ENCODE measurements at regions of chr12 and their contacts with region 1.

Region 1: DNA sequence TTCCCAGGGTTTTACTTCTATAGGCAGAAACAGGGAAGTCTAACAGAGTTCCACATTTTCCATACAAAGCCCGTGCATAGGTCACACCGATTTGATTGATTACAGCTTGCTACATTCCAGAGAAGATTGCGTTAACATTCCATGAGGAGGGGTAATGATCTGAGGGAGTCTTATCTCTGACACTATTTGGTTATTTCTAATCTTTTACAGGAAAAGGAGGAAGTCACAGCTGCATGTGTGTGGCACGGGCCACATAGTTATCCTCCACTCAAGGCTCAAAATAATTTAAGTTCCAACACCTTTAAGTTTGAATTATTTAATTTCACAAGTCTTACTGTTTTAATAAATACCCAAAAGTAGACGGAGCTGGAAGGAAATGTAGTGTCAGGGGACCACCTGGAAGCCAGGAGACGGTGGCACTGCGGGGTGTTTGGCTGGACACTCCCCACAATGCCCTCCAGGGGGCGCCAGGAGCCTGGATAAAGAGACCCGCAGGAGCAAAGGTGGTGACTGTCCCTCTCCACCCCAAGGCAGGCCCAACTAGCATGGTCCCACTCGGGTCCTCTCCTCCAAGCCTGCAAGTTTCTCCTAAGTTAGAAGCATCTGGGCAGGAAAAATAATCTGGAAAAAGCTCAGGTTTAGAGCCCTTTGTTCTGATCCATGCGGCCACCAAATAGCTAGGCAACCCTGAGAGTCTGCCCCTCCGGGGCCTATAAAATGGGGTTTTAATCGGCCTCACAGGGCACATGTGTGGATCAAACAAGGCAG is 20.2 kb downstream of the KRT8 start:
- DNase-seq: no peak
- H3K4me3 ChIP-seq: no peak overlapping the region
- H3K27ac ChIP-seq: no peak overlapping the region
- H3K27me3 ChIP-seq: no peaks in the 10 kb centered on the region
- CTCF ChIP-seq: peak; percentile 96

Region 2: GRCh38 chr12:52156736-52157565 is 727.8 kb before region 1 on chr12:
- CTCF ChIA-PET with region 1: interaction called, 29 read pairs
- POLR2A ChIA-PET with region 1: no interaction called
- DNase-seq: no peak
- H3K4me3 ChIP-seq: no peak overlapping the region
- H3K27ac ChIP-seq: no peak overlapping the region
- H3K27me3 ChIP-seq: no peaks in the 10 kb centered on the region
- CTCF ChIP-seq: peak; percentile 96

Region 3: DNA sequence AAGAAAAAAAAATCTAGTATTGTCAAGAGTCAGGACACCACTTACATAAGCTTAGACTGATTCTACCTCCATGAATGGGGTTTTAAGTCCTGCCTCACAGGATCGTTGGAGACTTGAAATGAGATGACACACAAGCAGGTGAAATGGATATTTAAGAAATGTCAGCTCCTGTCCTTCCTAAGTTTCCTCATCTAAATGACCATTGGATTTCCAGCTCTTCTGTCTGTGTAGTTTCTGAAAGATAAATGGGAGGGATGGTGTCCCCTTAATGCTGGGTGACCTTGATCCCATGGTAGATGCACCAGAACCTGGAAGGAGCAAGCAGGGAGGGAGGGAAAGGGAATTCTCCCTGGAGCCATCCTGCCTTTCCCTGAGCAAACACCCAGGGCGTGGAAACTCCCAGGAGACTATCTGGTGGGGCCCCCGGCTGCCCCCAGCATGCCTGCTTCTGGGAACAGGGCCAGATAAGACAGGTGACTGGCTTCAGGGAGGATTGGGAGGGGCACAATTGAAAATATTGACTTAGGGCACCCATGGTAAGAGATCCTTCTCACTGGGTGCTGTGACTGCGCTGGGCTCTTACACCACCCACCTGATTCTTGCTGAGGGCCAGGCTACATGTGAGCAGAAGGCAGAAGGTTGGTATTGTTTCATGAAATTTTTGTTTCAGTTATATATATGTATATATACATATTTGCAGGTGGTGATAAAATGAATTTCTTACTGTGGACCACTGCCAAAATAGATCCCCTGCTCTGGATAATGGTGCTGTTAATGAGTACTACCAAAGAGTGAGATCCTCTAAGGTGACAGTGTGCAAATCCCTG is 10.6 kb after region 1 on chr12:
- CTCF ChIA-PET with region 1: interaction called, 74 read pairs
- POLR2A ChIA-PET with region 1: no interaction called
- DNase-seq: no peak
- H3K4me3 ChIP-seq: no peak overlapping the region
- H3K27ac ChIP-seq: no peak overlapping the region
- H3K27me3 ChIP-seq: peaks cover 5% of the 10 kb centered on the region
- CTCF ChIP-seq: no peak

Region 4: DNA sequence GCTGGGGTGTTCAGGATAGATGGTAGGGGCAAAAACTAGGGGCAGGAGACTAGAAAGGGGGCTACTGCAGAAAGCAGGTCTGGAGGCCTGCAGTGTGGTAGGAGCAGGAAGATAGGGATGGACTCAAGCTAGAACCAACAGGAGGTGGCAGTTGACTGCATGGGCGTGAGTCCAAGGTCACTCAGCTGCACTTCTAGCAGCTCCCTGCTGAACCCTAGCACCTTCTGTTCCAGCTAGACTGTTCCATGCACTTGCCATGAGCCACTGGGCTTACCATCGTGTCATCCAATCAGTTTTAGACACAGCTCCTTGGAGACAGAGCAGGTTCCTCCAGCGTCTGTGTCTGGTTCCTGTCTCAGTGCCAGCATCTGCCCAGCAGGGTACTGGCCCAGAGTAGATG is 31.5 kb after region 1 on chr12:
- CTCF ChIA-PET with region 1: interaction called, 20 read pairs
- POLR2A ChIA-PET with region 1: no interaction called
- DNase-seq: no peak
- H3K4me3 ChIP-seq: no peak overlapping the region
- H3K27ac ChIP-seq: no peak overlapping the region
- H3K27me3 ChIP-seq: no peaks in the 10 kb centered on the region
- CTCF ChIP-seq: no peak

Region 5: DNA sequence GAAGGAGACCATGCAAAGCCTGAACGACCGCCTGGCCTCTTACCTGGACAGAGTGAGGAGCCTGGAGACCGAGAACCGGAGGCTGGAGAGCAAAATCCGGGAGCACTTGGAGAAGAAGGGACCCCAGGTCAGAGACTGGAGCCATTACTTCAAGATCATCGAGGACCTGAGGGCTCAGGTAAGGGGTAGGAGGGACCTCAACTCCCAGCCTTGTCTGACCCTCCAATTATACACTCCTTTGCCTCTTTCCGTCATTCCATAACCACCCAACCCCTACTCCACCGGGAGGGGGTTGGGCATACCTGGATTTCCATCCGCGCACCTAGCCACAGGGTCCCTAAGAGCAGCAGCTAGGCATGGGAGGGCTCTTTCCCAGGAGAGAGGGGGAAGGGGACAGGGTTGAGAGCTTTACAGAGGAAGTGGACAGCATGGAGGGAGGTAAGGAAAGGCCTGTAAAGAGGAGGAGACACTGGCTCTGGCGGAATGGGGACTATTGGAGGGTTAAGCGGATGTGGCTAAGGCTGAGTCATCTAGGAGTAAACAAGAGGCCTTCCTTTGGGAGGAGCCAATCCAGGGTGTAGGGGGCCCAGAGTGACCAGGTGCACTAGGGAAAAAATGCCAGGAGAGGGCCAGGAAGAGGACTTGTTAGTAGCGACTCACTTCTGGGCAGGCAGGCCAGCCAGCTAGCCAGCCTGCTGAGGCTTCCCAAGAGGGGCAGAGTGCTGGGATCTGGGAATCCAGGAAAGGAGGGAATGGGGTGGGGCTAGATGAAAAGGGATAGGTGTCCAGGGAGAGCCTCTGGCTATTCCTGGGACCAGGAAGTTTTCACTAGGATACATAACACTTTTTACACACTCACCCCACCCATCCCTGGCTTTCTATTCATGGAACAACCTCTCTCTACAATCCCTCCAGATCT is 65.0 kb after region 1 on chr12:
- CTCF ChIA-PET with region 1: interaction called, 26 read pairs
- POLR2A ChIA-PET with region 1: interaction called, 4 read pairs
- DNase-seq: peak; percentile 73
- H3K4me3 ChIP-seq: peak overlapping the region; percentile 74
- H3K27ac ChIP-seq: peak overlapping the region; percentile 61
- H3K27me3 ChIP-seq: no peaks in the 10 kb centered on the region
- CTCF ChIP-seq: no peak

Region 6: DNA sequence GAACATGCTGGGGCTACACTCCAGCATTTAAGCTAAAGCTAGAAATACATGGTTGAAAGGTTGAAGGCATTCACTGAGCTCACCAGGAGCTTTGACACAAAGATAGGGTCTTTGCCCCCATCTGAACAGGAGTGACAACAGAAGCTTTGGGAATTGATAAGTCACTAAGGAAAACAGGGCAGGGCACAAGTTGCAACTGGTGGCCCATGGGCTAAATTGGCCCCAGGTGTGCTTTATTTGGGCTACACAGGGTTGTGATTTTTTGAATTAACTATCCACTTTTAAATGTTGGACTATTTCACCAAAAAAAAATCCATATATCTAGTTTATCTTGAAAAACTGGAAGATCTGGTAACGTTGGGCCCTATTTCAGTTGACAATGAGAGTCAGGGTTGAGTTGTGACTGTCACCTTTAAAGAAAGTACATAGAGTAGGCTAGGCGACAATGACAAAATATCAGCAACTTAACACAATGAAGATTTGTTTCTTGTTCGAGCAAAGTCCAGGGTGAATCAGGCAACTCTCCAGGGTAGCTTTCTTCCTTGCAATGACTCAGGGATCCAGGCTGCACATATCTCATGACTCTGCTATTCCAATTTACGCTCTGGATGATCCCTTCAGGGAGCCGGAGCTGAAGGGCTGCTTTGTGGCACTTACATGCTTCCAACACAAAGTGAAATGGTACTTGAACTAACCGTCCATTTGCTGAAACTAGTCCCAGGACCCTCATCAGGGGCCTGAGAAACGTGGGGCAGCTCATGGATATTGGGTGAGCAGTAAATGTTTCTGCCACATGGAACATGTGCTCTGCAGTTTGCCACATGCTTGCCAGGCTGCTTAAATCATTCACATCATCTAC is 108.2 kb after region 1 on chr12:
- CTCF ChIA-PET with region 1: interaction called, 1,204 read pairs
- POLR2A ChIA-PET with region 1: no interaction called
- DNase-seq: no peak
- H3K4me3 ChIP-seq: no peak overlapping the region
- H3K27ac ChIP-seq: no peak overlapping the region
- H3K27me3 ChIP-seq: no peaks in the 10 kb centered on the region
- CTCF ChIP-seq: no peak

Region 7: GRCh38 chr12:53391729-53392128 is 507.0 kb after region 1 on chr12:
- CTCF ChIA-PET with region 1: no interaction called
- POLR2A ChIA-PET with region 1: no interaction called
- DNase-seq: no peak
- H3K4me3 ChIP-seq: no peak overlapping the region
- H3K27ac ChIP-seq: no peak overlapping the region
- H3K27me3 ChIP-seq: no peaks in the 10 kb centered on the region
- CTCF ChIP-seq: no peak

Measured in AG04450 (cell line).